Activated CD8-positive, alpha-beta memory T cell treated with anti-CD3 and anti-CD28 coated beads, Interleukin-2, amount 10 ng/mL, durations not matched to agents 7 days and 5 days (primary cell): ENCODE measurements at regions of chr11 and their contacts with region 1.

Region 1: GRCh38 chr11:123707606-123708205 is 33.8 kb downstream of the ZNF202 start:
- DNase-seq: peak; percentile 76
- ATAC-seq: peak; percentile 60
- H3K4me3 Mint-ChIP-seq: no peak overlapping the region
- H3K27ac Mint-ChIP-seq: no peak overlapping the region
- H3K4me1 Mint-ChIP-seq: no peaks in the 10 kb centered on the region
- H3K27me3 Mint-ChIP-seq: peaks cover 18% of the 10 kb centered on the region

Region 2: GRCh38 chr11:123580557-123581275 is 127.0 kb before region 1 on chr11:
- CTCF ChIA-PET with region 1: interaction called, 19 read pairs
- DNase-seq: peak; percentile 77
- ATAC-seq: peak; percentile 82
- H3K4me3 Mint-ChIP-seq: no peak overlapping the region
- H3K27ac Mint-ChIP-seq: no peak overlapping the region
- H3K4me1 Mint-ChIP-seq: peaks cover 31% of the 10 kb centered on the region
- H3K27me3 Mint-ChIP-seq: no peaks in the 10 kb centered on the region

Region 3: GRCh38 chr11:123640677-123641494 is 66.8 kb before region 1 on chr11:
- CTCF ChIA-PET with region 1: interaction called, 119 read pairs
- DNase-seq: peak; percentile 60
- ATAC-seq: peak; percentile 91
- H3K4me3 Mint-ChIP-seq: no peak overlapping the region
- H3K27ac Mint-ChIP-seq: no peak overlapping the region
- H3K4me1 Mint-ChIP-seq: peaks cover 2% of the 10 kb centered on the region
- H3K27me3 Mint-ChIP-seq: peaks cover 12% of the 10 kb centered on the region

Region 4: GRCh38 chr11:123694551-123694950 is 13.2 kb before region 1 on chr11:
- CTCF ChIA-PET with region 1: interaction called, 18 read pairs
- DNase-seq: no peak
- ATAC-seq: no peak
- H3K4me3 Mint-ChIP-seq: no peak overlapping the region
- H3K27ac Mint-ChIP-seq: no peak overlapping the region
- H3K4me1 Mint-ChIP-seq: no peaks in the 10 kb centered on the region
- H3K27me3 Mint-ChIP-seq: peaks cover 55% of the 10 kb centered on the region

Region 5: GRCh38 chr11:123719452-123719851 is 11.7 kb after region 1 on chr11:
- CTCF ChIA-PET with region 1: interaction called, 11 read pairs
- DNase-seq: no peak
- ATAC-seq: no peak
- H3K4me3 Mint-ChIP-seq: no peak overlapping the region
- H3K27ac Mint-ChIP-seq: no peak overlapping the region
- H3K4me1 Mint-ChIP-seq: no peaks in the 10 kb centered on the region
- H3K27me3 Mint-ChIP-seq: peaks cover 28% of the 10 kb centered on the region

Region 6: DNA sequence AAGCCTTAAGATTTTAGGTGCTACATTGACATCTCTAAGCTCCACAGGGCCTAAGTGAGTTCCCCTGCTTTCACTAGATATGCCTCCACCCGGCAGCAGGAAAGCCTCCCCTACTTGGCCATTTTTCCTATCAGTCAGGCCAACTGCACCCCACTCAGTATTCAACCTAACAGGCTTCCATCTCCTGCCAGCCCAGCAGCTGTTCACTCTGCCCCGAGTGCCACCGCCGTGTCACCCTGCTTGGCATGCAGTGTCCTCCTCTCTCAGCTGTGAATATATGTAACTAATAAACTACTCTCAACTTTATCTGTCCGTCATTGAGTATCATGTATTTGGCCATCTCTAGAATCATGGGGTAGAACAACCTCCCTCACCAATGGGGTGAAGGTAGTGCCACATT is 107.4 kb after region 1 on chr11:
- CTCF ChIA-PET with region 1: no interaction called
- DNase-seq: no peak
- ATAC-seq: no peak
- H3K4me3 Mint-ChIP-seq: no peak overlapping the region
- H3K27ac Mint-ChIP-seq: no peak overlapping the region
- H3K4me1 Mint-ChIP-seq: no peaks in the 10 kb centered on the region
- H3K27me3 Mint-ChIP-seq: peaks cover 6% of the 10 kb centered on the region